Dendritic cell treated with granulocyte-macrophage colony-stimulating factor and Interleukin-4, amounts not matched to agents 40 ng/mL and 50 ng/mL, for 4 days (primary cell): ENCODE measurements at regions of chrX and their contacts with region 1.

Region 1: GRCh38 chrX:71181910-71182799 is 37.5 kb downstream of the NLGN3 start:
- H3K4me3 Mint-ChIP-seq: peak overlapping the region; percentile 69
- H3K27ac Mint-ChIP-seq: peak overlapping the region; percentile 95
- H3K4me1 Mint-ChIP-seq: peaks cover 11% of the 10 kb centered on the region
- H3K27me3 Mint-ChIP-seq: no peaks in the 10 kb centered on the region

Region 2: GRCh38 chrX:70664726-70665125 is 517.4 kb before region 1 on chrX:
- intact Hi-C with region 1: no loop called
- H3K4me3 Mint-ChIP-seq: no peak overlapping the region
- H3K27ac Mint-ChIP-seq: no peak overlapping the region
- H3K4me1 Mint-ChIP-seq: no peaks in the 10 kb centered on the region
- H3K27me3 Mint-ChIP-seq: no peaks in the 10 kb centered on the region

Region 3: DNA sequence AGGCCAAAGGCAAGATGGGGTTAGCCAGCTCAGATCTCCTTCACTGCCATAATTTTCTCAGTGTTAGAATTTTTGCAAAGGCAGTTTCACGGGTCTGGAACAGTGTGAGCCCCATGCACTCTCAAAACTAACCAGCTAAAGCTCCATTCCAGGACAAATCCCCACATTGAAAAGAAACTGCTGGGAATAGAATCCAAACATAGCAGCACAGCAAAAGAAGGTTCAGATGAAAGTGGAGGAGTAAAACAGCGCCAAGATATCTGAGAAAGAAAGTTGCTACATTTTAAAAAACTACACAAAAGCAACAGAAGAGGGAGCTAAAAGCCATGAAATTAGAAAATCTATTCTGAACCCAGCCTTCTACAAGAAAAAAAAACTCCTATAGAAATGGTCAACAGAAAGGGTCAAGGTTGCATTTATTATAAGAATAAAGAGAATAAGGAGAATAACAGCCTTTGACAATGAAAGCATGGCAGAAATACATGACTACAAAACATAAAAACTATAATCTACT is 211.6 kb before region 1 on chrX:
- intact Hi-C with region 1: loop called (anchors 5 kb)
- H3K4me3 Mint-ChIP-seq: no peak overlapping the region
- H3K27ac Mint-ChIP-seq: no peak overlapping the region
- H3K4me1 Mint-ChIP-seq: no peaks in the 10 kb centered on the region
- H3K27me3 Mint-ChIP-seq: no peaks in the 10 kb centered on the region

Region 4: DNA sequence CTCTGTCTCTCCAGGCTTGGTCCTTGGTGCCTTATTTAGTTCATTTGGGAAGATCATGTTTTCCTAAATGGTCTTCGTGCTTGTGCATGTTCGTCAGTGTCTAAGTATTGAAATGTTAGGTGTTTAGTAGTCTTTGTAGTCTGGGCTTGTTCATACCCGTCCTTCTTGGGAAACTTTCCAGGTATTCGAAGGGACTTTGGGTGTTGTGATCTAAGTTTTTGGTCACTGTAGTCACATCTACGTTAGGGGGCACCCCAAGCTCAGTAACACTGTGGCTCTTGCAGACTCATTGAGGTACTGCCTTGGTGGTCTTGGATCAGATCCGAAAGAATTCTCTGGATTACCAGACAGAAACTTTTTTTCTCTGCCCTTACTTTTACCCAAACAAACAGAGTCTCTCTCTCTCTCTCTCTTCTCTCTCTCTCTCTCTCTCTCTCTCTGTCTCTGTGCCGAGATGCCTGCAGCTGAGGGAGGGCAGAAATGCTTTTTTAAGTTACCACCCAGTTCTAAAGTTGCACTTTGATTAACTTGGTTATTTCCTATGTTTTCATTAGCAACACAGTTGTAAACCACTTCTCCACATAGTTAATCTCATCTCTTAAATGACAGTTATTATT is 183.6 kb before region 1 on chrX:
- intact Hi-C with region 1: loop called (anchors 2 kb)
- H3K4me3 Mint-ChIP-seq: no peak overlapping the region
- H3K27ac Mint-ChIP-seq: no peak overlapping the region
- H3K4me1 Mint-ChIP-seq: peaks cover 7% of the 10 kb centered on the region
- H3K27me3 Mint-ChIP-seq: peaks cover 2% of the 10 kb centered on the region

Region 5: DNA sequence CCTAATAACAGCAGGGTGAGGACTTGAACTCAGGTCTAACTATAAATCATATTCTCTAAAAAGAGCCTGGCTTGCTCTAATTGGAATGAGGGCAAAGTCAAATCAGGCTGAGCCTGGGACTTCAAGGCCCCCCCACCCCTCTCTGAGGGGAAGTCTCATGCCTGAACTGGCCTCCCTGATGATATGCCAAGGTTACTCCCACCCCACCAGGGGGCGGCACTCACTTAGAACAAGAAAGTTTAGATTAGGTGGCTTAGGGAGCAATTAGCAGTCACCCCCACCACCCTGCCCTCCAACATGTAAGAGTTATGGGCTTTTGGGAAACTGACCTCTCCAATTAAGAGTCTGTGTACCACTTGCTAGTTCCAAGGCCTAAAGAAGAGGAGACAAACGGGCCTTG is 83.9 kb before region 1 on chrX:
- intact Hi-C with region 1: loop called (anchors 1 kb)
- H3K4me3 Mint-ChIP-seq: no peak overlapping the region
- H3K27ac Mint-ChIP-seq: no peak overlapping the region
- H3K4me1 Mint-ChIP-seq: peaks cover 19% of the 10 kb centered on the region
- H3K27me3 Mint-ChIP-seq: peaks cover 4% of the 10 kb centered on the region

Region 6: DNA sequence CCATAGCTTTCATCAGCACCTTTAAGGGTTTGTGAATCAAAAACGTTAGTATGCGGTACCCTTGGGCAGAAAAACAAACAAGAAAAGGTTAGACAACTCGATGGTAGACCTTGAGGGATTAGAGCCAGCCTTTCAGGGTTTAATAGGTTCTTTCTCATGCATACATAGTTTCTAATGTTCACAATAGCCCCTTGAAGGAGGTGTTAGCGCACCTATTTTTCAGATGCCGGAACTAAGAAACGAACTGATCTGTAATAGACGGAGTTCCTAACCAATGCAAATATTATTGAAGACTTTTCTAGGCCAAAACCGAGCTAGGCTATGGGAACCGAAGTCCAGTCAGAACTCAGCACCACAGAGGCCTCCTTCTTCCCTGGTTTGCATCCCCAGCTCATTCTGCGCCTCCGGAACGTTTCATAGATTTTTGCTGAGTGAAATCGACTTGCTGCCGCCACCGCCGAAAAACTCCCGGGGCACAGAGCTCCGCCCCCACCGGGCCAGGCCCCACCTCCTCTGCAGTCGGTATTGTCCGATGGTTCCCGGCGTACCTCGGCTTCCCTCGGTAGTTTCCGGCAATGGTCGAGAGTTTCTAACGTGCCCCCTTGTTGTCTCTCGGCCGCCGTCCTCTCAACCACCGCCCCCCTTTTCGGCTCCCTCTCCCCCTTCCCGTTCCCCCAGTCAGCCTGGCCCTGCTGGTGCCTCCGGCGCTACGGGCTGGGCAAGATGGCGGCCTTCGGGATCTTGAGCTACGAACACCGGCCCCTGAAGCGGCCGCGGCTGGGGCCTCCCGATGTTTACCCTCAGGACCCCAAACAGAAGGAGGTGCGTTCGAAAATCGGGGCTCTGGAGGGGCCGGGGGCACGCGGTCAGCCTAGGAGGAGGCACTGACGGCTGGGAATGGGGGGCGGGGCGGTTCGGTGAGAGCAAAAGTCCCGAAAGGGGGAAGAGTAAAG is 63.8 kb before region 1 on chrX and contains the start of gene MED12:
- intact Hi-C with region 1: no loop called
- H3K4me3 Mint-ChIP-seq: peak within 1 kb of the TSS; percentile 86
- H3K27ac Mint-ChIP-seq: peak within 1 kb of the TSS; percentile 95
- H3K4me1 Mint-ChIP-seq: peaks cover 7% of the 10 kb centered on the region
- H3K27me3 Mint-ChIP-seq: no peaks in the 10 kb centered on the region

Region 7: DNA sequence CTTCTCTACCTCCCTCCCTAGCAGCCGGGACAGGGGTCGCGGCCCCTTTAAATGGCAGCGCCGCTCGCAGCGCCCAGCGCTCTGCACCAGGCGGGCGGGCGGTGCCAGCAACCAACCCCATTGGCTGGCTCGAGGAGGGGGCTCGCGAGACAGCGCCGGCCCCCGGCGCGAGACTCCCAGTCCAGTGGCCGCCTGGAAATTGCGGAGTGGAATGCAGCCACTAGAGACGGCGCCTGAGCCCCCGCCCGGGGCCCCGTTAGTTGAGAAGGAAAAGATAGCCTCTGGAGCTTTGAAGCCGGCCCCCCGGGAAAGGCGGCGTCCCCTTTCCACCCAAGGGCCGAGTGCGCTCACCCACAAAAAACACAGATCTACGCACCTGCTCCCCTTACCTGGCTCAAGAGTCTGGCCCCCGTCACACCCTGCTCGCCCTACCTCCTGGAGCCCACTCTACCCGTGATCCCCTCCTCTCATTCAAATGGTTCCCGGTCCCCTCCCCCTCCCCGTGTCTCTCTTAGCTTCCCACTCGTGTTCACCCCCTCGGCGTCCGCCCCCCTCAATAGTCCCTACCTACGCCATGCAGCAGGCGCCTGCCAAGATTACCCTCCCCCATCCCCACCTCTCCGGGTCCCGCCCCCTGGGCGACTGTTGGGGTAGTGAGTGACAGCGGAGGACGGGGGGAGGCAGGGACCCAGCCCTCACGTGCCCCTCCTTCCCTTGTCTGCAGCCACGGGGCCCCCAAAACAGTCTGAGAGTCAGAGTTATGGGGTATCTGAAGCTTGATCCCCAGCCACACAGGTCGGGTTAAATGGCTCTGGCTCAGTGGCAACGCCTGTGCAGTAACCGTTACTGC is 72.2 kb after region 1 on chrX and contains the start of gene ZMYM3:
- intact Hi-C with region 1: loop called (anchors 10 kb)
- H3K4me3 Mint-ChIP-seq: peak within 1 kb of the TSS; percentile 87
- H3K27ac Mint-ChIP-seq: peak within 1 kb of the TSS; percentile 97
- H3K4me1 Mint-ChIP-seq: peaks cover 44% of the 10 kb centered on the region
- H3K27me3 Mint-ChIP-seq: no peaks in the 10 kb centered on the region